ENCODE measurements at regions of chr9 and their contacts with region 1.

Region 1: DNA sequence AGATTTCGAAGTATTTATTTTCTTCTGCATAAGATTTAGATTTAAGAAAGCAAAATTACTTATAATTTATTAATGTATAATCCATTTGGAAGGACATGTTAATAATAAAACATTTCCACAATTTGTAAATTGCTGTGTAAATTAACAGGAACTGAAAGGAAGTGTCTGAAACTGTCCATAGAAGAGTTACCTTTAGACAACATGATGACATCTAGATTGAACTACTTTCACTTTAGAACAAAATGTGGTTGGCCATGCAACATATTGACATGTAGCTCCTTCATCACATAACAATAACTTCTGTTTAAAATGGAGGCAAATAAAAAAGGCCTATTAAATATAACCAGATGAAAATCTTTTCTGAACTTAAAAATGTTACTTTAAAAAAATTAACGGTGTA is 1849.5 kb upstream of the ACO1 start:
- DNase-seq: no peak
- ATAC-seq: no peak
- H3K4me3 ChIP-seq: no peak overlapping the region
- H3K27ac ChIP-seq: no peak overlapping the region
- H3K4me1 ChIP-seq: no peaks in the 10 kb centered on the region
- H3K27me3 ChIP-seq: no peaks in the 10 kb centered on the region
- CTCF ChIP-seq: no peak
- POLR2A ChIP-seq: no peak

Region 2: GRCh38 chr9:30484690-30485089 is 50.2 kb before region 1 on chr9:
- intact Hi-C with region 1: loop called in 1 of 10 experiments (anchors 5 kb)
- DNase-seq: no peak
- ATAC-seq: no peak
- H3K4me3 ChIP-seq: no peak overlapping the region
- H3K27ac ChIP-seq: no peak overlapping the region
- H3K4me1 ChIP-seq: no peaks in the 10 kb centered on the region
- H3K27me3 ChIP-seq: no peaks in the 10 kb centered on the region
- CTCF ChIP-seq: no peak
- POLR2A ChIP-seq: no peak

Region 3: DNA sequence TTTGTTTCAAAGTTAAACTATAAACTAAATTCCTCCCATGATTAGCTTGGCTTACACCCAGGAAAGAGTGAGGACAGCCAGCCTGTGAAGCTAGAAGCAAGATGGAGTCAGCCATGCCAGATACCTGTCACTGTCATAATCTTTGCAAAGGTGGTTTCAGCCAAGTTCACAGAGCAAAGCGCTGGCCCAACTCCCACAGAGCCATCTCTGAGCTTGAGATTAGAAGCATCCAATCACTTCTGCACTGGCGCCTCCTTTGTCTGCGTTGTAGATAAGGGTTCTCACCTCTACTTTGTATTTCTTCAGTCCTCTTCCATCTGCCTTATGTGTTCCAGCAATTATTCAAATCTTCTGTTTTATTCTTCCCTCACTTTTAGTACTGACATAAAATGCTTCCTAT is 1730.1 kb after region 1 on chr9:
- intact Hi-C with region 1: no loop called
- DNase-seq: no peak
- ATAC-seq: no peak
- H3K4me3 ChIP-seq: no peak overlapping the region
- H3K27ac ChIP-seq: no peak overlapping the region
- H3K4me1 ChIP-seq: no peaks in the 10 kb centered on the region
- H3K27me3 ChIP-seq: no peaks in the 10 kb centered on the region
- CTCF ChIP-seq: no peak
- POLR2A ChIP-seq: no peak